ENCODE measurements at regions of chr12 and their contacts with region 1.

Region 1: DNA sequence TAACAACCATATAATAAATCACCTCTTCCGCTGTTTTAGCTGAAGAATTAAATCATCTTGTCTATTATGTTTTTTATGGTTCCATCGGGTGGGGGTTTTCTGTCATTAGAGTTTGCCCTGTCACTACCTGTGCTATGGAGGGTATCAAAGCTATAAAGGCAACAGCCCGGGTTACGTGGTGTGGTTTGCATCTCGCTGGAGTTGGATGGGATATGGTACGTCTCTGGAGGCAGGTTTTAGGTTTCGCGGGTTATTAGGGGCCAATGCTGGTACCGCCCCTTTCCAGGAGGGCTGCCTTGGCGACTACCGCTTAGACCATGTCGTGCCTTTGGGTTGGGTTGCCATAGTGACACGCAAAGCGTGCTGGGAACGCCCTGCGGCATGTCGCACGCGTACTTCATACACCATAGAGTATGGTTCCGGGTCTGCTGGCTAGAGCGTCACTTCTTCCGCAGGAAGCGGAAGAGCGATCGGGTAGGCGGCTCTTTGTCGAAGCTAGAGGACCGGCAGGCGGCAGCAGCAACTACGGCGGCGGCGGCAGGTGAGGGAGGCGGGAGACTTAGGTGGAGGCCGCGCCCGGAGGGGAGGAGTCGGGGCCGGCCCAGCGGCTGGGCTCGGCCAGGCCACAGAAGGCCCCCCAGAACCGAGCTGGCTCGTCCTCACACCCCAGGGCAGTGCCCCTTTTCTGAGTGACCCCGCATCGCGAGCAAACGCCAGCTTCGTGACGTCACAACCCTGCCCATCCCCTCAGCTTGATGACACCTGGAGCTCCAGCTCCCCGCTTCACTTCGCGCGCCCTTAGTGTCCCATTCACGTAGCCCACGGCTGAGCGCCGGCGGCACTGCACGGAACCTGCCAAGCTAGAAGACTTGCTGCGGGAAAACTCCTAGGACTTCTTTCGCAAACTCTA is at the start of gene ZC3H10:
- DNase-seq: peak; percentile 99
- H3K4me3 ChIP-seq: peak within 1 kb of the TSS; percentile 59 to 88 (median 68)
- H3K27ac ChIP-seq: peak within 1 kb of the TSS; percentile 87 to 98 (median 94)
- H3K4me1 ChIP-seq: peaks cover 0 to 46% (median 30%) of the 10 kb centered on the region in 4 donors
- H3K27me3 ChIP-seq: no peaks in the 10 kb centered on the region
- CTCF ChIP-seq: peak in 3 of 4 experiments; percentile 30 to 33 (median 32)
- EP300 ChIP-seq: peak in 2 of 4 donors; percentile 2 to 85
- POLR2A ChIP-seq: peak; percentile 88 to 91
- total RNA-seq, gene ZC3H10: 3.9 to 6.9 (median 4.8) TPM

Region 2: GRCh38 chr12:56158029-56158925 is 40.2 kb after region 1 on chr12 and contains the start of gene MYL6:
- intact Hi-C with region 1: loop called (anchors 2 kb)
- DNase-seq: peak; percentile 99
- H3K4me3 ChIP-seq: peak within 1 kb of the TSS; percentile 61 to 99 (median 78)
- H3K27ac ChIP-seq: peak within 1 kb of the TSS; percentile 93 to 99 (median 94)
- H3K4me1 ChIP-seq: peaks cover 0 to 59% (median 43%) of the 10 kb centered on the region in 4 donors
- H3K27me3 ChIP-seq: no peaks in the 10 kb centered on the region
- CTCF ChIP-seq: no peak
- EP300 ChIP-seq: no peak
- POLR2A ChIP-seq: peak; percentile 100
- total RNA-seq, gene MYL6: 6,491 to 9,553 (median 8,571) TPM

Region 3: DNA sequence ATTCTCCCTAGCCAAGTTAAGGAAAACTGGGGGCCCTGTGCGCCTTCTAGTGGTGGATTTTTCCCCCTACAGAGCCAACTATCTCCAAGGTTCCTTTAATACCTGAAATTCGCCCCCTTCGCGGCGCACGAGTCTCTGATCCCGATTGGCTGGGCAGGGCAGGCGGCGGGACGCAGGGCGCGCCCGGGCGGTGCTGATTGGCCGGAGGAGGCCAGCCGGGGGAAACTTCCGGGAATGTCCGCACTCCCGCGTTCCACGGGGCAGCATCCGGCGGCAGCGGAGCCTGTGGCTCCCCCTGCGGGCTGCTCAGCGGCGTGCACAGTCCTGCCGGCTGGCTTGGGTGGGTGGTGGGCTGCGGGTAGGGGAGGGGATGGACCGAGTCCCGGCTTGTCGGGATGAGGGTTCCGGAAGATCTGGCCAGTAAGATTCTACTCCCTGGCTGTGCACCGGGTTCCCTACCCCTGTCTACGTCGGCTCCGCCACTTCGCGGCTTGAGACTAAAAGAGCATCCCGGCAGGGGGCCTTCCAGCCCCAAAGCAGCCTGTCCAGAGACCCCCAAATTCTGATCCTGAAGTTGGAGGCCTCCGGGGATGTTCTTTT is 106.2 kb after region 1 on chr12 and contains the start of gene NABP2:
- intact Hi-C with region 1: loop called (anchors 2 kb)
- DNase-seq: peak; percentile 99
- H3K4me3 ChIP-seq: peak within 1 kb of the TSS; percentile 42 to 65 (median 57)
- H3K27ac ChIP-seq: peak within 1 kb of the TSS; percentile 98 to 99 (median 98)
- H3K4me1 ChIP-seq: peaks cover 0 to 47% (median 45%) of the 10 kb centered on the region in 4 donors
- H3K27me3 ChIP-seq: no peaks in the 10 kb centered on the region
- CTCF ChIP-seq: peak; percentile 84 to 94 (median 88)
- EP300 ChIP-seq: no peak
- POLR2A ChIP-seq: peak in 1 of 2 donors; percentile 21
- total RNA-seq, gene NABP2: 17.2 to 33.5 (median 31.6) TPM

Region 4: DNA sequence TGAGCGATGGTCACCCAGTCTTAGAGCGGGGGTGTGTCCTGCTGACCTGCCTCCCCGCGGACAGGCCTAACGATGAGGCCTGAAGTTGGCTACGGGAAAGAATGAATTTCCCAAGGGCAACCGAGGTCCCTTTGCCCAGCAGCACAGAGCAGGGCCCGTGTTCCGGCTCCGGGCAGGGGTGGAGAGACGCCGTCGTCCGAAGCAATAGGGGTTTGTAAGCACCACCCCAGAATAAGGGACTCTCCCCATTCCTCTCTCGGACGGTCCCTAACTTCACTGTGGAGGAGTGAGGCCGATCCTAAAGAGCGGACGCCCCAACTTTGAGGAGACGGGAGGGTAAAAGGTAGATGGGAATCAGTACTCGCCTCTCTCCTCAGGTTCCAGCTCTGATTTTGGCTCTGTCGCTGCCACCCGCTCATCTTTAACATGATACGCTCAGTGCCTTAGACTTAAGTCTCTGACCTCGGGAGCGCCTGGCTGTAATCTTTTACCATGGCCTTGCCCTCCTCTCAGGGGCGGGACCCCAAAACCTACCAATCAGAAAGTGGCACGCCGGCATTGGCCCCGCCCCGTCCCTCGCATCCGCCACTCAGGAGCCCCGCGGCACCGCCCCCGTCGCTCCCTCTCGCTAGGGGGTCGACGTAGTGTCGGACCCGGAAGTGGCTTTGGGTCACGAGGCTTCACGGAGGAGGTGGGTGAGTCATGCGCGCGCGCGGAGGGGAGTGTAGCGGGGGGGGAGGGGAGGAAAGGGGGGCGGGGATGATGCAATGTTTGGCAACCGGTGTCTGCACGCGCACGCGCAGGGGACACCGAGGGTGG is 1402.2 kb after region 1 on chr12 and contains the start of gene DDIT3:
- intact Hi-C with region 1: loop called (anchors 5 kb)
- DNase-seq: peak; percentile 100
- H3K4me3 ChIP-seq: peak within 1 kb of the TSS; percentile 85 to 96 (median 89)
- H3K27ac ChIP-seq: peak within 1 kb of the TSS; percentile 95 to 100 (median 98)
- H3K4me1 ChIP-seq: peaks cover 0 to 66% (median 64%) of the 10 kb centered on the region in 4 donors
- H3K27me3 ChIP-seq: no peaks in the 10 kb centered on the region
- CTCF ChIP-seq: no peak
- EP300 ChIP-seq: peak in 2 of 4 donors; percentile 7 to 82
- POLR2A ChIP-seq: peak; percentile 99
- total RNA-seq, gene DDIT3: 30.7 to 48.5 (median 40.7) TPM

Measured in sigmoid colon (tissue), 7 donors.